ENCODE measurements at regions of chr18 and their contacts with region 1.

Region 1: DNA sequence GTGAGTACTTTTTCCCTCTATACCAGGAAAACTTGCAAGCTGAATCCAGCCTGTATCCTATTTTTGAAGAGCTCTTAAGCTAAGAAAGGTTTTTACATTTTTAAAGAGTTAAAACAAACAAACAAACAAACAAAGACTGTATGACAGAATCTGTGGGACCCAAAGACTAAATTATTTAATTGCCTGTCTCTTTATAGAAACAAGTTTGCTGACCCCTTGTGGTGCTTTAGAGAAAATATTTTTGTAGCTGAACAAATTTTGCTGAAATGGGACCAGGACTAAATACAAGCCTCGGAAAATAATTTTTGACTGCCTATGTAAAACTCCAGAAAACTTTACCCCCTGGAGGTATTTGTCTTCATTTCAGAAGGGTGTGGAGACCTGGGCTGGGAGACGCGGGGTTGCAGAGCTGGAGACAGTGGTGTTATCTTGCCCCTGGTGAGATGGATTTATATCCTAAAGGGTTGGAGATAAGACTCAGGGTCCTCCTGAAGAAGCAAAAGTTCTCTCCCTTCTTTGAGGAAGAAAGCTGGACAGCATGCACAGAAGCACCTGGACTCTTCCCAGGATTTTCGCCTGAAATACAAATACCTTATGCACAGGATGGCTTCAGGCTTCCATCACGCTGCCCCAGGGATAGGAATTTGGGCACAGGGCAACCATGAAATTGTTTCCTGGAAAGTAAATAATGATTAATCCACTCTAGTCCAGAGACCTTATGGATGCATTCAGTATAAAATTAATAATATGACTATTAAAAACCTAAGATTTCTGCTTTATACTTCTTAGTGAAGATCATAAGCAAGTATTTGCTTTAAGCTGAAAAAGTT is 54.3 kb downstream of the TMX3 start:
- DNase-seq: peak in 3 of 14 experiments; percentile 35 to 52 (median 43)
- ATAC-seq: no peak
- H3K4me3 ChIP-seq: no peak overlapping the region
- H3K4me3 Mint-ChIP-seq: no peak overlapping the region
- H3K27ac ChIP-seq: no peak overlapping the region
- H3K27ac Mint-ChIP-seq: no peak overlapping the region
- H3K4me1 ChIP-seq: no peaks in the 10 kb centered on the region
- H3K4me1 Mint-ChIP-seq: no peaks in the 10 kb centered on the region
- H3K27me3 ChIP-seq: no peaks in the 10 kb centered on the region
- H3K27me3 Mint-ChIP-seq: peaks cover 5% of the 10 kb centered on the region
- CTCF ChIP-seq: peak; percentile 69

Region 2: GRCh38 chr18:68714609-68715496 is 54.3 kb after region 1 on chr18 and contains the start of gene TMX3:
- CTCF ChIA-PET with region 1: no interaction called
- POLR2A ChIA-PET with region 1: no interaction called
- intact Hi-C with region 1: no loop called
- DNase-seq: peak; percentile 81 to 97 (median 90)
- ATAC-seq: peak; percentile 98
- H3K4me3 ChIP-seq: peak within 1 kb of the TSS; percentile 81
- H3K4me3 Mint-ChIP-seq: peak within 1 kb of the TSS; percentile 99
- H3K27ac ChIP-seq: peak within 1 kb of the TSS; percentile 16 to 36
- H3K27ac Mint-ChIP-seq: peak within 1 kb of the TSS; percentile 90
- H3K4me1 ChIP-seq: peaks cover 23% of the 10 kb centered on the region
- H3K4me1 Mint-ChIP-seq: peaks cover 55% of the 10 kb centered on the region
- H3K27me3 ChIP-seq: no peaks in the 10 kb centered on the region
- H3K27me3 Mint-ChIP-seq: no peaks in the 10 kb centered on the region
- CTCF ChIP-seq: no peak
- total RNA-seq, gene TMX3: 30.9 to 33.3 TPM

Region 3: GRCh38 chr18:68735483-68736343 is 75.1 kb after region 1 on chr18:
- CTCF ChIA-PET with region 1: no interaction called
- POLR2A ChIA-PET with region 1: no interaction called
- intact Hi-C with region 1: loop called in 1 of 2 experiments (anchors 5 kb)
- DNase-seq: peak in 3 of 14 experiments; percentile 43 to 58 (median 53)
- ATAC-seq: peak; percentile 64
- H3K4me3 ChIP-seq: no peak overlapping the region
- H3K4me3 Mint-ChIP-seq: no peak overlapping the region
- H3K27ac ChIP-seq: no peak overlapping the region
- H3K27ac Mint-ChIP-seq: no peak overlapping the region
- H3K4me1 ChIP-seq: no peaks in the 10 kb centered on the region
- H3K4me1 Mint-ChIP-seq: no peaks in the 10 kb centered on the region
- H3K27me3 ChIP-seq: no peaks in the 10 kb centered on the region
- H3K27me3 Mint-ChIP-seq: no peaks in the 10 kb centered on the region
- CTCF ChIP-seq: peak; percentile 51

Measured in CD4-positive, alpha-beta T cell (primary cell).